ENCODE measurements at regions of chr22 and their contacts with region 1.

Region 1: DNA sequence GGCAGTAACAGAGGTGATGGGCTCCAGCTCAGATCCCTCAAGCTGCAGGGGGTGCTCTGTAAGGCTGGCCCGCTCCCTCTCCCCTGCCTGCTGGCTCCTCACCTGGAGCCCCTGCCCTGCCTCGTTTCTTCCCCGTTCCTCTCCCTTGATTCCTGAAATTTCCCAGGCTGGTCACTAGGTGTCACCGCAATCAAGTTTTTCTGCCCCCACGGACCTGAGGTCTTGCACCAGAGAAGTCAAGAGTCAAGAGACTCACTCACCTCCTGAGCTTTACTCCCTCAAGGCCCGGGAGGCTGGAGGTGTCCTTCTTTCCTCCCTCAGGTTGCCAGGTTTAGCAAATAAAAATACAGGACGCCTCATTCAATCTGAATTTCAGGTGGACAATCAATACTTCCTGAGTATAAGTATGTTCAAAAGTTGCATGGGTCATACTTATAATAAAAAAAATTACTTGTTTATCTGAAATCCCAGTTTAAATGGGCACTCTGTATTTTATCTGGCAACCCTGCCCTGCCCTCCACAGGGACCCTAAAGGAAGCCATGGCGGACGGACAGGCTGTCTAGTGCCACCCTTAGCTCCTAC is 69.2 kb downstream of the SCUBE1 start:
- DNase-seq: no peak
- ATAC-seq: peak; percentile 77

Region 2: DNA sequence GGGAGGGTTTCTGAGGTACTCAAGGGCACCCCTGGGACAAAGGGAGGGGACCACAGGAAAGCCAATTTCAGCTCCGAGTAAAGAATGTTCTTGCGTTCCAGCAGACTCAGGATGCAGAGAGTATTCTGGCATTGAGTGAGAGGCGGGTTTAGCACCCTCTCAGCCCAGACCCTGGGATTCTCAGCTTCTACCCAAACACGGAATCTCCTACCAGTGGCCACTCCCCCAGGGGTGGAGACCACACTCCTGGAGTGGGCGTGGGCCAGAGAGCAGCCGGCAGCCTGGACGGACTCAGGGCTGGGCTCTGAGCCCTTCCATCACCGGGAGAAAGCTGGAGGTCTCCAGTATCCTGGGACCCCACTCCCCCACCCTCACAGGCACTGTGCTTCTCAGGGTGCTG is 60.9 kb before region 1 on chr22:
- intact Hi-C with region 1: no loop called
- DNase-seq: no peak
- ATAC-seq: no peak

Region 3: DNA sequence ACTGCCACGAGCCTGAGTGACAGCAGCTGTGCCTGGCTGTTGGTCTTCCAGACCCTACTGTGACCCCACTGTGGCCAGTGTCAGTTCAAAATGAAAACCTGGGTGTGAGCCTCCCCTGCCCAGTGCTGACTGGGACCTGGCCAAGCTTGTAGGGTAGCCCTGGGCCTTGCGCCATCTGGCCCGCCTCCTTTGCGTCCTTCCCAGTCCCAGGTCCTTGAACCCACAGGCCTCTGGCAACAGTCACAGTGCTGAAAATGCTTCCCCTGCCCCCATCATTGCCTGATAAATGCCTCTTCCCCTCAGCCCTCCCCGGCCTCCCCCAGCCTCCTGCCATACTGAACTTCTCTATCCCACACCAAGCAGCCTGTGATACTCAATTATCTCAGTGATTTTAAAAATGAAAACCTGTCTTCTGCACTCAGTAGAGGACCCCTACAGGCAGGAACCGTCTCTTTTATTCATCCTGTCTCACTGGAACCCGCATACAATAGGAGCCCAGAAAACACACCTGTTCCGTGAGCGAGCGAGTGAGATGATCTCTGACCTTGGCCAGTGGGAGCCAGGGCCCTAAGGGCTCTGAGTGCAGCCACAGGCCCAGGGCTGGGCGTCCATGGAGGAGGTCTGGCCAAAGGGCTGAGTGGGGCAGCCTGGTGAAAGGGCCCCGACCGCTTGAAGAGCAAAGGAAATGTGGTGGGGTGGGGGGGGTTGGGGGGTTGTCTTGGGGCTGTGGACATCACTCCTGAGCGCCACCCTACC is 37.4 kb before region 1 on chr22:
- intact Hi-C with region 1: no loop called
- DNase-seq: peak; percentile 90
- ATAC-seq: peak; percentile 92

Region 4: DNA sequence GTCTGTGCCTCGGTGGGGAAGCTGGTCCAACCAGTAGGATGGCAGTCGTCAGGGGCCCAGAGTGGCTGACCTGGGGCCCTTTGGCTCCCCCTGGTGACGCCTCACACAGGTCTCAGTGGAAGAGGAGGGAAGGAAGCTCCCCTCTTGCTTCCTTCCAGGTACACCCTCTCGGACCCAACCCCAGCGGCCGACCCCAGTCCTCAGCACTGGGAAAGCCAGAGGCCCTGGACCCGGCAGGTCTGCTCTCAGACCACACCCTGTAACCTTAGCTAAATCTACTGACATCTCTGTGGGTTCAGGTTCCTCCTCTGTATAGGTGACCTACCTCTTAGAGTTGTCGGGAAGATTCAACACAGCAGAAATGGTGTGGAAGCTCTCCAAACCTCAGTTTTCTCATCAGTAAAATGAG is 72.5 kb after region 1 on chr22:
- intact Hi-C with region 1: loop called (anchors 10 kb)
- DNase-seq: peak; percentile 82
- ATAC-seq: peak; percentile 79